PC-9 (cell line): ENCODE measurements at regions of chrX and their contacts with region 1.

Region 1: DNA sequence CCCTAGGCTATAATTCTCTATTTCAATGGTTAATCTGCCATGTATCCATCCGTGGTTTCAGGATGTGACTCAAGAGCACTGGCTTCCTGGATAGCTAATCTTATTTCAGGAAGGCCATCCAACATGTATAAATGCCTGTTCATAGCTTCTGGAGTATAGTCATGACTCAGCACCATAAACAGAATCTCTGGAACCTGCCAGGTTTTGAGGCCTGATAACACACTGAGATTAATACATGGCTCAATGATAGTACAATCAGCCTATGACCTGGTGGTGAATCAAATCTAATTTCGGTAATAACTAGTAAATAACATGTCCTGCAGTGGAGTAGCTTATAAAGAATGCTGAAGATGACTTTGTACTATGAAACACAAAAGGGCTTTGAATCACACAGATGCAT is 5.7 kb upstream of the IL13RA2 start:
- DNase-seq: peak in 1 of 2 experiments; percentile 87
- H3K4me3 ChIP-seq: no peak overlapping the region
- H3K27ac ChIP-seq: peak overlapping the region; percentile 80
- H3K4me1 ChIP-seq: peaks cover 38% of the 10 kb centered on the region
- H3K27me3 ChIP-seq: no peaks in the 10 kb centered on the region
- CTCF ChIP-seq: no peak

Region 2: GRCh38 chrX:114675365-114675764 is 347.8 kb before region 1 on chrX:
- CTCF ChIA-PET with region 1: no interaction called
- POLR2A ChIA-PET with region 1: interaction called, 11 read pairs
- intact Hi-C with region 1: no loop called
- DNase-seq: peak in 1 of 2 experiments; percentile 70
- H3K4me3 ChIP-seq: no peak overlapping the region
- H3K27ac ChIP-seq: no peak overlapping the region
- H3K4me1 ChIP-seq: peaks cover 17% of the 10 kb centered on the region; the same call in 1 of the 2 replicates
- H3K27me3 ChIP-seq: no peaks in the 10 kb centered on the region
- CTCF ChIP-seq: no peak